Tibial artery (tissue), 4 donors: ENCODE measurements at regions of chr9 and their contacts with region 1.

Region 1: DNA sequence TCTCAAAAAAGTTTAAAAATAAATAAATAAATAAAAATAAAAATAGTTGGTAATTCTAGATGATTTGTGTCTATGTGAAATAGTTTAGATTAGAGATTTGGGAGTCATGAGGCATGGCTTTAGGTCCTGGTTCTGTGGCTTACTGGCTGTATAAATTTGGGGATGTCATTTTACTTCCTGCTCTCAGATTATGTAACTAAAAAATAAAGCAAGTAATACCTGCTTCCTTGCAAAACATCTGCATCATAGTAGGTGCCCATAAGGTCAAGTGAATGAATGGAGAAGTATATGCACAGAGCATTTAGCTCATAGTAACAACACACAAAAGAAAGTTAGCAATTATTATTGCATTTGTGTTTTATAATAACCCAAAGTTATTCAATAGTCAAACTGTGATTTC is 287.7 kb upstream of the TLE4 start:
- DNase-seq: no peak
- H3K4me3 ChIP-seq: no peak overlapping the region
- H3K27ac ChIP-seq: no peak overlapping the region
- H3K4me1 ChIP-seq: no peaks in the 10 kb centered on the region
- H3K27me3 ChIP-seq: no peaks in the 10 kb centered on the region
- CTCF ChIP-seq: no peak

Region 2: DNA sequence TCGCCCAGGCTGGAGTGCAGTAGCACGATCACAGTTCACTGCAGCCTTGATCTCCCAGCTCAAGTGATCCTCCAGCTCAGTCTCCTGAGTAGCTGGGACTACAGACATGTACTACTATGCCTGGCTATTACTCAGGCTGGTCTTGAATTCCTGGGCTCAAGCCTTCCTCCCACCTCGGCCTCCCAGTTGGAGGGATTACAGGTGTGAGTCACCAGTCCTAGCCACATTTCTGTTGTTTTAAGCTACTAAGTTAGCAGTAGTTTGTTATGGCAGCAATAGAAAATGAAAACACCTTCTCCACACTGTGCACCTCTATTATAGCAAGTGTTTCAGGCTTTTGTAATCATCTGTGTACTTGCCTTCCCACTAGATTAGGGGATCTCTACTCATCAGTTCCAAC is 301.2 kb before region 1 on chr9:
- intact Hi-C with region 1: no loop called
- DNase-seq: no peak
- H3K4me3 ChIP-seq: no peak overlapping the region
- H3K27ac ChIP-seq: no peak overlapping the region
- H3K4me1 ChIP-seq: no peaks in the 10 kb centered on the region
- H3K27me3 ChIP-seq: no peaks in the 10 kb centered on the region
- CTCF ChIP-seq: no peak

Region 3: DNA sequence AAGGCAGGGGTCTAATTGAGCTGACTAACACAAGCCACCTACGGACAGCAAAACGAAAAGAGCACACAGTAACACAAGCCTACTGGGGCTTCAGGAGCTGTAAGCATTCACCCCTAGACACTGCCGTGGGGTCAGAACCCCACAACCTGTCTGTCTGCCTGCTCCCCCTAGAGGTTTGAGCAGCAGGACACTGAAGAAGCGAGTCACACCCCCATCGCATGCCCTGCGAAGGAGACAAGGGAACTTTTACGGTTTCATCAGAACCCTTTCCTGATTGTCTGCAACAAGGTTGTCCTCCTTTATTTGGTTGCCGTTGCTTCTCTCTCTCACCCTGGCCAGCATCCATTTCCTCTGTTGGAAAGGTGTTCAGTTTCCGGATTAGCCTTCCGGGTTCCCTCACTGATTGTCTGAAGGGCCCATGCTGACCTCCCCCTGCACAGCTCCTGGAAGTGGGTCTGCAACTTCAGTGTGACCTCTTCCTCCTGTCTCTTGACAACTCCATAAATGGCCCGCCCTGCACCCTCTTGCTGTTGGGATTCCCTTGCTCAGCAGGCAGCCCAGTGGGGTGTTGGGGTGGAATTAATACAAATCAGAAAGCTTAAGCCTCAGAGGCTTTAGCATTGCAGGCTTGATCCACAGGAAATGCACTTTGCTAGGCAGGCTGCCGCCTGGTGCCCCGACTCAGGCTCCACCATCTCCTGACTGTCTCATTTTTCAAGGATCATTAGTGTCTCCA is 28.8 kb after region 1 on chr9:
- intact Hi-C with region 1: loop called (anchors 1 kb)
- DNase-seq: no peak
- H3K4me3 ChIP-seq: no peak overlapping the region
- H3K27ac ChIP-seq: no peak overlapping the region
- H3K4me1 ChIP-seq: no peaks in the 10 kb centered on the region
- H3K27me3 ChIP-seq: no peaks in the 10 kb centered on the region
- CTCF ChIP-seq: no peak